ENCODE measurements at regions of chr1 and their contacts with region 1.

Region 1: DNA sequence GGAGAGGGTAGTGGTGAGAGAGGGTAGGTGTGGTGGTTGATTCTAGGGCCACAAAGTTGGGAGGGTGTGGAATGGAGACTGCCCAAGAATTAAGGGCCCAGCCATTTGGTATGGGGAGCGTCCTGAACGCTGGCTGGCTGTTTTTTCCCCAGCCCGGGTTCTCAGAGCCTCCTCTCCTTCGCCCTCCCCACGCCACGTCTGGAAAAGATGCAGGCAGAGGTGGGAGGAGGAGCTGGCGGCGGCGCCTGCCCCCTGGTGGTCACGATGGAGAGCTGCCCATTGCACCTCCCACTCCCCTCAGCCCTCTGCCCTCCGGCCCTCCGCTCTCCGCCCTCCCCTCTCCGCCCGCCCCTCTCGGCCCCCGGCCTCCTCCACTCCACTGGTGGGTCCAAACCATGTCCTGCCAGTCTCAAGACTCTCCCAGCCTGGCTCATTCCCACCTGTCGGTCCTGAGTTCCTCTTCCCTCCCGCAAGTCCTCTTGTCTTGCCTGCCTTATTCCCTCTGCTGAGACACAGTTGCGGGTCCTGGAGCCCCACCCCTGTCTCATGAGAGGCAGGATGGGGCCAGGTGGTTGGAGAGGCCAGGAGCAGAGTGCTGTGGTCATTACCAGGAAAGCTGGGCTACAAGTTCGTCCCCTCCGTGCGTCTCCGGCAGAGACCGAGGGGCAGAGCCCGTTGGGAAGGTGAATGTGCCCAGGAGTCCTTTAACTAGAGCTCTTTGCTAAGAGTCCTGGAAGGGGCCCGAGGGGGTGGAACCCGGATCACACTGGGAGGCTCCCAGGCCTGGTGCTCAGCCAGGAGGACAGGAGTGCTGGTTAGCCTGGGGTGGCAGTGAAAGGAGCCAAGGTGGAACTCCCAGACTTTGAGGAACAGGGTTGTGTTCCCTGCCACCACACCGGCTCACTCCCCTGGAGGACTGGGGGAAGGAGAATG is 22.6 kb downstream of the ETNK2 start:
- DNase-seq: peak; percentile 78 to 93
- H3K4me3 ChIP-seq: peak overlapping the region; percentile 31 to 34 (median 34)
- H3K27ac ChIP-seq: peak overlapping the region; percentile 13 to 79 (median 68)
- H3K4me1 ChIP-seq: peaks cover 21 to 57% (median 39%) of the 10 kb centered on the region in 4 donors
- H3K27me3 ChIP-seq: no peaks in the 10 kb centered on the region
- CTCF ChIP-seq: peak in 6 of 7 experiments; percentile 33 to 94 (median 86)
- EP300 ChIP-seq: no peak
- POLR2A ChIP-seq: no peak

Region 2: DNA sequence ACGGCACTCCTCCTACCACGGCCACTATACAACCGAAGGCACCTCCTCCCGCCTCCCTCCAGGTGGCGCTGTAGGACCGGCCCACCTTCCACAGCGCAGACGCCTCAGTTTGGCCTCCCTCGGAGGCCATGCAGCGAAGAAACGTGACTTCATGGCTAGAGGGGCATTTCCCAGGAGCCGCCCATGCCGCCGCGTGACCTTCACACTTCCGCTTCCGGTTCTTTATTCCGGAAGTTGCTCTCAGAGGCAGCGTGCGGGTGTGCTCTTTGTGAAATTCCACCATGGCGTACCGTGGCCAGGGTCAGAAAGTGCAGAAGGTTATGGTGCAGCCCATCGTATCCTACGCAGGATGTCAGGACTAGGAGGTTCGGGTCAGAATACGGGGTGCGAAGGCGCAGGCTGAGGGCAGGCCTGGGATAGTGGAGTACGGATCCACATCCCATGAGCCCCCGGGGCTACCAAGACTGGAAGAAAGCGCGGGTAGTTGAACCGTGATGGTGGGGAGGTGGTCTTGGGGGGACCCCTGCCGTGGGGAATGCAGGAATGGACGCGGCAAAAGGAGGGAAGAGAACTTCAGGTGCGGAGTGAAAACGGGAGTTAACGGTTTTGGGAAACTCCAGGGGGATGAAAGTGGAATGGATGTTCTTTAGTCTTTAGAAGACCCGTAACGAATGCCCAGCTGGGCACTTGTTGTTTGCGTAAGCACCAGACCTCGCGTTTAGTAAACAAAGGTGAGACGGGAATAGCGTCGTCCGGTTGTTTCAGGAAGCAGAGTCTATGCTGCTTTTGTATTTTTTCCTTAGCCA is 267.6 kb before region 1 on chr1 and contains the start of gene SNRPE:
- intact Hi-C with region 1: loop called (anchors 5 kb)
- DNase-seq: peak; percentile 95 to 100
- H3K4me3 ChIP-seq: peak within 1 kb of the TSS; percentile 72 to 85 (median 80)
- H3K27ac ChIP-seq: peak within 1 kb of the TSS; percentile 65 to 82 (median 69)
- H3K4me1 ChIP-seq: peaks cover 16 to 29% (median 23%) of the 10 kb centered on the region in 4 donors
- H3K27me3 ChIP-seq: no peaks in the 10 kb centered on the region
- CTCF ChIP-seq: peak in 6 of 7 experiments; percentile 89 to 100 (median 96)
- EP300 ChIP-seq: peak; percentile 11
- POLR2A ChIP-seq: no peak
- total RNA-seq, gene SNRPE: 8.7 to 470 (median 52.9) TPM in 4 of 5 donors, not detected in the other

Region 3: GRCh38 chr1:203878422-203878821 is 250.8 kb before region 1 on chr1:
- intact Hi-C with region 1: loop called (anchors 5 kb)
- DNase-seq: no peak
- H3K4me3 ChIP-seq: no peak overlapping the region
- H3K27ac ChIP-seq: no peak overlapping the region
- H3K4me1 ChIP-seq: no peaks in the 10 kb centered on the region
- H3K27me3 ChIP-seq: no peaks in the 10 kb centered on the region
- CTCF ChIP-seq: no peak
- EP300 ChIP-seq: no peak
- POLR2A ChIP-seq: no peak

Region 4: DNA sequence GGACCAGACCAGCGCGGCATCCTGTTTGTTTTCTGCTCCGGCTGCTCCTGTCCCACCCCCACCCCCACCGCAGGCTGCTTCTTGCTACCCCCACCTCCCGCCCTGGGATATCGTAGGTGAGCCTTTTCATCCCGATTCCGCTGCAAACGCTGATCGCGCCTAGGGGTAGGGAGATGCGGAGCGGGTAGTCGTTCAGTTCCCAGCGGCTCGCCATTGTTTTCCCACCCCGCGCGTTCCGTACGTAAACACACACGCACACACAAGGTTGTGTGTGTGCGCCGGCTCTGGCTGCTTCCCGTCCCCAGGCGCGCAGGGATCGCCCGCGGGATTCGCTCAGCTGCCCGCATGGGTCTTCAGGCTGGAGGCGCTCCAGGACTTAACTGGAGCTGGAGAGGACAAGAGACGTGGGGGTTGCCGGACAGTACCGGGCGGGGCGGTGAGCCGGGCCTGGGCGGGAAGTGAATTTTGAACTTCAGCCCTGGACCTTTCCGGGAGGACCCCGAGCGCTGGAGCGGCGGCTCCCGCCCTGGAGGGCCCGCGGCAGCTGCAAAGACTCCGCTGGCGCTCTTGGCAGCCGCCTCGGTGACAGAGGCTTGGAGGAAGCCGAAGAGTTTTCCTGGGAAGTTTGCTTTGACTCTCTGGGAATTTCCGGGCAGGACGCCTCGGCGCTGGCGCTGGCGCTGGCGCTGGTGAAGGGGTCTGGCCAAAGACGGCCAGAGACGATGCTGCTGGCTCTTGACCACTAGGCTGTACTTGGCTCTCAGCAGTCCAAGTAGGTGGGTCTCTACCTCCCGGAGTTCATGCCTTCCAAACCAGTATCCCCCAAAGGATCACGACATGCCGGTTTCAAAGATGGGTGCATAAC is 54.7 kb before region 1 on chr1:
- intact Hi-C with region 1: loop called (anchors 5 kb)
- DNase-seq: peak; percentile 58 to 90
- H3K4me3 ChIP-seq: peak overlapping the region; percentile 69 to 77 (median 74)
- H3K27ac ChIP-seq: peak overlapping the region; percentile 80 to 95 (median 89)
- H3K4me1 ChIP-seq: peaks cover 32 to 72% (median 68%) of the 10 kb centered on the region in 4 donors
- H3K27me3 ChIP-seq: peaks cover 0 to 64% (median 11%) of the 10 kb centered on the region in 3 donors
- CTCF ChIP-seq: no peak
- EP300 ChIP-seq: no peak
- POLR2A ChIP-seq: no peak

Region 5: GRCh38 chr1:204323887-204324286 is 194.7 kb after region 1 on chr1:
- intact Hi-C with region 1: no loop called
- DNase-seq: peak in 1 of 2 donors; percentile 56
- H3K4me3 ChIP-seq: no peak overlapping the region
- H3K27ac ChIP-seq: peak overlapping the region in 1 of 5 donors; percentile 8
- H3K4me1 ChIP-seq: peaks cover 18 to 52% (median 36%) of the 10 kb centered on the region in 4 donors
- H3K27me3 ChIP-seq: no peaks in the 10 kb centered on the region
- CTCF ChIP-seq: no peak
- EP300 ChIP-seq: no peak
- POLR2A ChIP-seq: no peak

Region 6: GRCh38 chr1:204350857-204351573 is 221.8 kb after region 1 on chr1:
- intact Hi-C with region 1: no loop called
- DNase-seq: peak; percentile 77 to 95
- H3K4me3 ChIP-seq: peak overlapping the region in 2 of 4 donors; percentile 17 to 35
- H3K27ac ChIP-seq: peak overlapping the region; percentile 49 to 82 (median 78)
- H3K4me1 ChIP-seq: peaks cover 26 to 57% (median 44%) of the 10 kb centered on the region in 4 donors
- H3K27me3 ChIP-seq: no peaks in the 10 kb centered on the region
- CTCF ChIP-seq: no peak
- EP300 ChIP-seq: no peak
- POLR2A ChIP-seq: no peak

Measured in stomach (tissue), 19 donors.